ENCODE measurements at regions of chr20 and their contacts with region 1.

Region 1: GRCh38 chr20:38730989-38731737 is 6.9 kb downstream of the SLC32A1 start:
- DNase-seq: peak; percentile 59
- H3K4me3 Mint-ChIP-seq: peak overlapping the region; percentile 52
- H3K27ac Mint-ChIP-seq: no peak overlapping the region
- H3K4me1 Mint-ChIP-seq: peaks cover 6% of the 10 kb centered on the region
- H3K27me3 Mint-ChIP-seq: peaks cover 93% of the 10 kb centered on the region
- CTCF ChIP-seq: peak; percentile 95

Region 2: GRCh38 chr20:38543014-38543906 is 187.9 kb before region 1 on chr20:
- CTCF ChIA-PET with region 1: no interaction called
- POLR2A ChIA-PET with region 1: no interaction called
- intact Hi-C with region 1: no loop called
- DNase-seq: no peak
- H3K4me3 Mint-ChIP-seq: no peak overlapping the region
- H3K27ac Mint-ChIP-seq: no peak overlapping the region
- H3K4me1 Mint-ChIP-seq: no peaks in the 10 kb centered on the region
- H3K27me3 Mint-ChIP-seq: no peaks in the 10 kb centered on the region
- CTCF ChIP-seq: no peak

Region 3: GRCh38 chr20:38715646-38716045 is 15.5 kb before region 1 on chr20:
- CTCF ChIA-PET with region 1: interaction called, 47 read pairs
- POLR2A ChIA-PET with region 1: interaction called, 3 read pairs
- intact Hi-C with region 1: no loop called
- DNase-seq: no peak
- H3K4me3 Mint-ChIP-seq: no peak overlapping the region
- H3K27ac Mint-ChIP-seq: no peak overlapping the region
- H3K4me1 Mint-ChIP-seq: no peaks in the 10 kb centered on the region
- H3K27me3 Mint-ChIP-seq: peaks cover 54% of the 10 kb centered on the region
- CTCF ChIP-seq: no peak

Region 4: DNA sequence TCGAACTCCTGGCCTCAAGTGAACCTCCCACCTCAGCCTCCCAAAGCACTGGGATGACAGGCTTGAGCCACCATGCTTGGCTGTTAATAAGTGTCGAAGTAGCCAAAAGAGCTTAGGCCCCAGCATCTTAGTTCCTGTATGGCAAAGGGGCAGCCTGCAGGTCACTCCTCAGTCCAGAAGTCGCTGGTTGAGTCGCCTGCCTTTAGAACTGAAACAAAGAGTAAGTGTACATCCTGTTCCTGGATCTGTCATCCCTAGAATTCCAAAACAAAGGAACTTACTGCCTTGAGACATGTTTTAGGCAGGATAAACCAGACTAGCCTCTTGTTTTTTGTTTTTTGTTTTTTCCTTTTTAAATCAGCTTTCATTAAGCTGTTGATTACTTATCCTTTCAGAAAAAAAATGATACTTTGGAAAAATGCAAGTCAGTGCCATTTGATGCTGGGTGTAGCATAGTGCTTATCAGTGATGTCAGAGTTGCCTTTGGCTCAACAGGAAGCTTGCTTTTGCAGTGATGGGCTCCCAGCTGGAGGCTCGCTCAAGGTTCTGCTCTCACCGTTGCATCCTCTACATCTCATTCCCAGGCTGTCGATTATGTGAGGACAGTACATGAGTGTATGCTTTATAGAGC is 26.1 kb after region 1 on chr20:
- CTCF ChIA-PET with region 1: interaction called, 71 read pairs
- POLR2A ChIA-PET with region 1: no interaction called
- intact Hi-C with region 1: no loop called
- DNase-seq: no peak
- H3K4me3 Mint-ChIP-seq: no peak overlapping the region
- H3K27ac Mint-ChIP-seq: no peak overlapping the region
- H3K4me1 Mint-ChIP-seq: no peaks in the 10 kb centered on the region
- H3K27me3 Mint-ChIP-seq: no peaks in the 10 kb centered on the region
- CTCF ChIP-seq: no peak

Region 5: GRCh38 chr20:38833857-38834164 is 102.6 kb after region 1 on chr20:
- CTCF ChIA-PET with region 1: no interaction called
- POLR2A ChIA-PET with region 1: no interaction called
- intact Hi-C with region 1: no loop called
- DNase-seq: no peak
- H3K4me3 Mint-ChIP-seq: no peak overlapping the region
- H3K27ac Mint-ChIP-seq: no peak overlapping the region
- H3K4me1 Mint-ChIP-seq: no peaks in the 10 kb centered on the region
- H3K27me3 Mint-ChIP-seq: peaks cover 15% of the 10 kb centered on the region
- CTCF ChIP-seq: no peak

Region 6: DNA sequence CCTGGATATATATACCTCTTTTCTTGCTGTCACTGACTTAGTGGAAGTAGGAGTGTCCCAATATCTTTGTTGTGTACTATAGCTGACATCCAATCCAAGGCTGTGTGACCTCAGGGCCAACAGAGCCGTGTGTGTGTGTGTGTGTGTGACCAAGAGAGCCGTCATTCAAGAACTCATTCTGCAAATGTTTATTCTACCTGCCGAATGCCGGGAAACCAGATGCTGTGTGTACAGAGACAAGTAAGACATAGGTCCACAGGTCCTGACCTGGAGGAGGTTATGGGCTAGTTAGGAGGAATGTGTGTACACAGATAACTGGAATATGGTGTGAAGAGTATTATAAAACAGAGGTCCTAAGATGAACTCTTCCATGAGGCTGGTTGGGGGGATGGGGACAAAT is 421.0 kb after region 1 on chr20:
- CTCF ChIA-PET with region 1: no interaction called
- POLR2A ChIA-PET with region 1: no interaction called
- intact Hi-C with region 1: no loop called
- DNase-seq: no peak
- H3K4me3 Mint-ChIP-seq: no peak overlapping the region
- H3K27ac Mint-ChIP-seq: no peak overlapping the region
- H3K4me1 Mint-ChIP-seq: no peaks in the 10 kb centered on the region
- H3K27me3 Mint-ChIP-seq: peaks cover 28% of the 10 kb centered on the region
- CTCF ChIP-seq: no peak